ENCODE measurements at regions of chr3 and their contacts with region 1.

Region 1: DNA sequence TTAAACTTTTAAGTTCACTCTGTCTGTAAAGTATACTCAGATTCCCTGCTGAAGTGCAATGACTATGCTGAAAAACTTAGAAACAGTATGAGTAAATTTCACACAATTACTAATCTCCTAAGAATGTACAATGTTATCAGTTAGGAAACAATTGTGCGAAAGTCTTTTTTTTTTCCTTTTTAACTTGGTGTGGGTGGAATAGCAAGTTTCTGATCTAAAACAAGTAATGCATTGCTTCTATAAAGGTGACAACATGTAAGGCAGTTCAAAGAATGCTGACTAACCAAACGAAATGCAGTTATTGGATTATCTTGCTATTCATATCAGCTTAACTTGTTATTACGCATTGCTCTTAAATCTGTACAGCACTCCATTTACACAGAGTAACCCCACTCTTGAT is 19.3 kb upstream of the SLC12A8 start:
- DNase-seq: no peak
- H3K4me3 Mint-ChIP-seq: no peak overlapping the region
- H3K27ac Mint-ChIP-seq: no peak overlapping the region
- H3K4me1 Mint-ChIP-seq: peaks cover 5% of the 10 kb centered on the region
- H3K27me3 Mint-ChIP-seq: no peaks in the 10 kb centered on the region

Region 2: GRCh38 chr3:124429129-124429815 is 802.6 kb before region 1 on chr3:
- intact Hi-C with region 1: no loop called
- DNase-seq: no peak
- H3K4me3 Mint-ChIP-seq: no peak overlapping the region
- H3K27ac Mint-ChIP-seq: no peak overlapping the region
- H3K4me1 Mint-ChIP-seq: no peaks in the 10 kb centered on the region
- H3K27me3 Mint-ChIP-seq: no peaks in the 10 kb centered on the region

Region 3: DNA sequence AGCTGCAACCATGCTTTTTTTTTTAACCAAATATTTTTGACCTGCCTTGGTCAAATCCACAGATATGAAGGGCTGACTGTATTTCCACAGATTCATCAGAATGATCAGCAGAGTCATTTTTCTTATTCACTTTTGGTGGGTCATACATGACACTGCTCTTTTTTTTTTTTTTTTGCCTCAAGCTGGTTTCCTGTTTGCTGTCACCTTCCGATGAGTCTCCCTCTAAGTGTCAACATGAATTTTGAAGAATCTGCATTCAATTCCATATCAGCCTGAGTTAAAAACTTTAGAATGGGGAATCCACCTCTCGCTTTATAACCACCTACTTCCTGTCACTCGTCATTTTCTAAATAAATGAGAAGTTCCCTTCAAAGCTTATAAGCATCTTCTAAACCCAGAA is 17.2 kb before region 1 on chr3:
- intact Hi-C with region 1: loop called (anchors 2 kb)
- DNase-seq: peak; percentile 67
- H3K4me3 Mint-ChIP-seq: no peak overlapping the region
- H3K27ac Mint-ChIP-seq: peak overlapping the region; percentile 35
- H3K4me1 Mint-ChIP-seq: peaks cover 17% of the 10 kb centered on the region
- H3K27me3 Mint-ChIP-seq: peaks cover 44% of the 10 kb centered on the region